Activated B cell treated with CpG ODN at 0.5 μM for 24 hours (primary cell): ENCODE measurements at regions of chr11 and their contacts with region 1.

Region 1: DNA sequence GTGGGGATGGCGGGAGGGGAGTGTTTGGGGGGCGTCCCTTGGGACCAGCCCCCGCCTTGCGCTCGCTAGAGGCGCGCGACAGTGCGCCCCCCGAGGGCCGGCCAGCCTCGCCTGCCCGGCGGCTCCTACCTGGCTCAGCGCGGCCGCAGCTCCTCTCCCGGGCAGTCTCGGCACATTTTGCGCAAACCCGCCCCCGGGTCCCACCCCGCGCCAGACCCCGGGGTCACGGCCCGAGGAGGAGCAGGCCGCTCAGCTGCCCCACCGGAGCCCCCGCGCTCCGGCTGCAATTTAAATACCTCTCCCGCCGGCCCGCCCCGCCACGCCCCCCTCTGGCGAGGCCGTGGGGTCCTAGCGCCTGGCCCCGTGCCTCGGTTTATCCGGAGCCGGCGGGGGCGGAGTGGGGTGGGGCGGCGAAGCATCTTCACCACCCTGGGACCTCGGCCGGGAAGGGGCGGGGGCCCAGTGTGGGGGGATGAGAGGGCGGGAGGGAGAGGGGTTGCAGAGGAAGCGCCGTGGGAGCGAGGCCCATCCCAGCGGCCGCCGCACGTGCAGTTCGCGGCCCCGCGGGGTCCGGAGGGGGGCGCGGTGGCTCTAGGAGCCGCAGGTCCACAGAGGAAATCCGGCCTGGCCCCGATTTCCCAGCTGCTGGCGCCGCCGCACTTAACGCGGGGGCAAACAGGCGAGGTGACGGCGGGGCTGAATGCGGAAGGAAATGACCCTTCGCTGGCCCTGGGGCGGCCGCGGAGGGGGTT is at the start of gene LRRC32:
- DNase-seq: no peak
- ATAC-seq: no peak
- H3K4me3 Mint-ChIP-seq: peak within 1 kb of the TSS; percentile 86
- H3K27ac Mint-ChIP-seq: peak within 1 kb of the TSS; percentile 76
- H3K4me1 Mint-ChIP-seq: peaks cover 89% of the 10 kb centered on the region
- H3K27me3 Mint-ChIP-seq: peaks cover 24% of the 10 kb centered on the region
- CTCF ChIP-seq: no peak
- total RNA-seq, gene LRRC32: 25.8 and 27.8 TPM in 2 replicates

Region 2: GRCh38 chr11:75689863-75690609 is 980.6 kb before region 1 on chr11:
- CTCF ChIA-PET with region 1: no interaction called
- POLR2A ChIA-PET with region 1: no interaction called
- intact Hi-C with region 1: loop called (anchors 2 kb)
- DNase-seq: no peak
- ATAC-seq: peak; percentile 87
- H3K4me3 Mint-ChIP-seq: peak overlapping the region; percentile 69
- H3K27ac Mint-ChIP-seq: peak overlapping the region; percentile 94
- H3K4me1 Mint-ChIP-seq: peaks cover 40% of the 10 kb centered on the region
- H3K27me3 Mint-ChIP-seq: peaks cover 4% of the 10 kb centered on the region
- CTCF ChIP-seq: no peak

Region 3: GRCh38 chr11:76235233-76236091 is 435.2 kb before region 1 on chr11:
- CTCF ChIA-PET with region 1: no interaction called
- POLR2A ChIA-PET with region 1: no interaction called
- intact Hi-C with region 1: loop called (anchors 2 kb)
- DNase-seq: peak; percentile 82
- ATAC-seq: peak; percentile 78
- H3K4me3 Mint-ChIP-seq: peak overlapping the region; percentile 95
- H3K27ac Mint-ChIP-seq: peak overlapping the region; percentile 95
- H3K4me1 Mint-ChIP-seq: peaks cover 32% of the 10 kb centered on the region
- H3K27me3 Mint-ChIP-seq: peaks cover 7% of the 10 kb centered on the region
- CTCF ChIP-seq: no peak

Region 4: GRCh38 chr11:76444384-76445123 is 226.1 kb before region 1 on chr11 and contains the start of gene EMSY:
- CTCF ChIA-PET with region 1: no interaction called
- POLR2A ChIA-PET with region 1: no interaction called
- intact Hi-C with region 1: loop called (anchors 5 kb)
- DNase-seq: peak; percentile 78
- ATAC-seq: peak; percentile 95
- H3K4me3 Mint-ChIP-seq: peak within 1 kb of the TSS; percentile 95
- H3K27ac Mint-ChIP-seq: peak within 1 kb of the TSS; percentile 93
- H3K4me1 Mint-ChIP-seq: peaks cover 31% of the 10 kb centered on the region
- H3K27me3 Mint-ChIP-seq: no peaks in the 10 kb centered on the region
- CTCF ChIP-seq: no peak
- total RNA-seq, gene EMSY: 24.9 and 31.1 TPM in 2 replicates

Region 5: DNA sequence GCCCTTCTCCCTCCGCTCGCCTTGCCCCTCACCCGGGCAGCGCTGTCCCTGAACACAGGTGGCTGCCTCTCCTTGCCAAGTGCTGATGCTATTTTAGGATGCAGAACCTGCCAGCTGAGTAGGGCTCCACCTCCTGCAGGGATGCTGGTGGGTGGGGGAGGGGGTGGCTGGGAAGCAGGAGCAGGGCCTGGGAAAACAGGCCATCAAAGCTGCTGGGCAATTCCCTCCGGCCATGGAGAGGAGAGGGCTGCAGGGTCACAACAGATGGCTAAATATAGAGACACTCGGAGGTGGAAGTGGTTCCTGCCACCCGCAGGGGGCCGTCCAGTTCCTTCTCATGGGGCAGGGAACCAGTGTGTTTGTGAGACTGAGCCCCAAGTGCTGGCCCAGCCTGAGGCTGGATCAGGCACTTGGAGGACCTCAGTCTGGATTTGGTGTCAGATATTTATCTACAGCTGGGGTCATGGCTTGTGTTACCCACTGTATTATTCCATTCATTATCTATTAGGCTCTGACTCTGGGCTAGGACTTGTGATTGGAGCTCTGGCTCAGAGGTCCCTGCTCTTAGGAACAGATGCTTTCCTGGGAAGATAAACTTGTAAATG is 59.7 kb before region 1 on chr11:
- CTCF ChIA-PET with region 1: no interaction called
- POLR2A ChIA-PET with region 1: interaction called, 5 read pairs
- intact Hi-C with region 1: loop called (anchors 1 kb)
- DNase-seq: no peak
- ATAC-seq: no peak
- H3K4me3 Mint-ChIP-seq: no peak overlapping the region
- H3K27ac Mint-ChIP-seq: no peak overlapping the region
- H3K4me1 Mint-ChIP-seq: peaks cover 32% of the 10 kb centered on the region
- H3K27me3 Mint-ChIP-seq: peaks cover 27% of the 10 kb centered on the region
- CTCF ChIP-seq: no peak

Region 6: DNA sequence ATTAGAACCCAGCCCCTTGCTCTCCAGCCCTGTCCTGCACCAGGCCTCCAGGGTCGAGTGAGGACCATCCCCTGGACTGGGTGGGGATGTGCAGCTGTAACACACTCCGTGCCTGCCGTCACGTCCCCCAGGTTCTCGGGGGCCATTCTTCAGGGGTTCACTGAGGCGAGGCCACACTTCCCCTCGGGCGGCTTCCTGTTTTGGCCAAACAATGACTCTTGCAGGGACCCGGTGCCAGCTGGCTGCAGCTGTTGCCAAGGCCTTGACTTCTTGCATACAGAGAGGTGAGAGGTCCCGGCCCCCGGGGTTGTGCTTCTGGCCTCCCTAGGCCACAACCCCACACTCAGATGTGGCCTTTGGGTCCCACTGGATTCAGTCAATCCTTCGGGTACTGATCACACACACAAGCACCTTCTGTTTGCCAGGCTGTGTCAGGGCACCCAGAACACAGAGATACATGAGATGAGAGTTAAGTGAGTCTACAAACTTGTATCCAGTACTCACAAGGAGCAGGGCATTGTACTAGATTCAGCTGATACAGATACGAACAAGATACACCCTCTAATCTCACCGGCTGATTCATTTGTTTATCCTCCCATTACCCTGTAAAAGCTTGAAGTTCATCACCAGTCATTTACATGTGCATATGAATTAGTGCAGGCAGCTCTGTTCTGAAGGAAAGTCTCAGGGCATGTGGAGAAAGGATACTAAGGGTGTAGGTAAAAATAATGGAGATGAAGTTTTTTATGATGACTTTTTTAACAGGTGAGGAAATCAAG is 33.0 kb before region 1 on chr11:
- CTCF ChIA-PET with region 1: interaction called, 3 read pairs
- POLR2A ChIA-PET with region 1: interaction called, 193 read pairs
- intact Hi-C with region 1: loop called (anchors 1 kb)
- DNase-seq: peak; percentile 64
- ATAC-seq: peak; percentile 90
- H3K4me3 Mint-ChIP-seq: peak overlapping the region; percentile 50
- H3K27ac Mint-ChIP-seq: peak overlapping the region; percentile 85
- H3K4me1 Mint-ChIP-seq: peaks cover 67% of the 10 kb centered on the region
- H3K27me3 Mint-ChIP-seq: peaks cover 9% of the 10 kb centered on the region
- CTCF ChIP-seq: no peak

Region 7: GRCh38 chr11:76686261-76687079 is 15.8 kb after region 1 on chr11:
- CTCF ChIA-PET with region 1: interaction called, 10 read pairs
- POLR2A ChIA-PET with region 1: interaction called, 26 read pairs
- intact Hi-C with region 1: no loop called
- DNase-seq: no peak
- ATAC-seq: peak; percentile 80
- H3K4me3 Mint-ChIP-seq: peak overlapping the region; percentile 80
- H3K27ac Mint-ChIP-seq: peak overlapping the region; percentile 77
- H3K4me1 Mint-ChIP-seq: peaks cover 36% of the 10 kb centered on the region
- H3K27me3 Mint-ChIP-seq: peaks cover 26% of the 10 kb centered on the region
- CTCF ChIP-seq: no peak